Prostate gland (tissue), 2 donors: ENCODE measurements at regions of chr17 and their contacts with region 1.

Region 1: DNA sequence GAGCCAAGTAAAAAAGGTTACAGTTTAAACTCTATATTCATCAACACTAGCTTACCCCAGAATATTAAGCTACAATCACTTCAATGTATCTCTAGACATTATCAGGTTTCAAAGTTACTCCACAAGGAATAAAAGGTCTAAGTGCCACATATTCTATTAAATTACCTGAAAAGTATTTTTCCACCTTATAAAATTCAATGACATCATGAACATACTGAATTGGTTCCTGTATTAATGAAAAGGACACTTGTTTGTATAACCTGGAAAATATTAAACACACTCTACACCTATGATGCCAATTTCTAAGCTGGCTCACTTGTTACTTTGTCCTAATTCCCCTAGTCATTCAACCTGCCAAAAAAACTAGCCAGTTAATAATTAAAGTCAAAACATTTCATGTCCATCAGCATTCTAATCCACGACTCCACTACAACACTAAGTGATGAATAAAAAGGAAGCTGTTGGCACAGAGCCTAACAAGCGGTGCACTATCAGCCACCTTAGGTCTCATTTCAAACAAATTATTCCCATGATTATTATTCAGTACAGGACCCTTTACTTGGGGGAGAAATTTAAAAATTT is 12.2 kb downstream of the MED13 start:
- DNase-seq: no peak
- H3K4me3 ChIP-seq: no peak overlapping the region
- H3K27ac ChIP-seq: no peak overlapping the region
- H3K4me1 ChIP-seq: no peaks in the 10 kb centered on the region
- H3K27me3 ChIP-seq: no peaks in the 10 kb centered on the region
- CTCF ChIP-seq: no peak
- POLR2A ChIP-seq: no peak

Region 2: DNA sequence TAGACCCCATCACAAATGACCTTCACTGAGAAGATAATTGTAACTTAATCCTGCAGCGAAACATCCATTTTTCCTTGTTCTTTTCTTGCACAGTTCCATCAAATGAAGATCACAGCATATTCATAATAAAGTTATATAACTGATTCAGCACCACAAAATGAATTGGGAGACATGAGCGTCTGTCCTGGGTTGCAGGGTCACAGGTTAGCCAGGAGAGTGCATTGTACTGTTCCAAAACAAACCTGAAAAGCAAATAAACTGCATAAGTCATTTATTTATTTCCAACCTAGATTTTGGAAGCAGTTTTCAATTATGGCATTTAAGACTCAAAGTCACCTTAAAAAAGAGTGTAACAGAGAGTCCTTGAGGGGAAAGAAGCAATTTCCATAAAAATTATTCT is 106.5 kb before region 1 on chr17:
- intact Hi-C with region 1: loop called (anchors 10 kb)
- DNase-seq: no peak
- H3K4me3 ChIP-seq: no peak overlapping the region
- H3K27ac ChIP-seq: no peak overlapping the region
- H3K4me1 ChIP-seq: no peaks in the 10 kb centered on the region
- H3K27me3 ChIP-seq: no peaks in the 10 kb centered on the region
- CTCF ChIP-seq: no peak
- POLR2A ChIP-seq: no peak